ENCODE measurements at regions of chr5 and their contacts with region 1.

Region 1: GRCh38 chr5:136080483-136081216 is 51.9 kb downstream of the TGFBI start:
- DNase-seq: peak; percentile 80 to 86 (median 86)
- H3K4me3 ChIP-seq: peak overlapping the region; percentile 11 to 61 (median 43)
- H3K27ac ChIP-seq: no peak overlapping the region
- H3K4me1 ChIP-seq: peaks cover 0 to 16% (median 5%) of the 10 kb centered on the region in 4 experiments
- H3K27me3 ChIP-seq: peaks cover 10 to 61% (median 54%) of the 10 kb centered on the region in 5 experiments

Region 2: DNA sequence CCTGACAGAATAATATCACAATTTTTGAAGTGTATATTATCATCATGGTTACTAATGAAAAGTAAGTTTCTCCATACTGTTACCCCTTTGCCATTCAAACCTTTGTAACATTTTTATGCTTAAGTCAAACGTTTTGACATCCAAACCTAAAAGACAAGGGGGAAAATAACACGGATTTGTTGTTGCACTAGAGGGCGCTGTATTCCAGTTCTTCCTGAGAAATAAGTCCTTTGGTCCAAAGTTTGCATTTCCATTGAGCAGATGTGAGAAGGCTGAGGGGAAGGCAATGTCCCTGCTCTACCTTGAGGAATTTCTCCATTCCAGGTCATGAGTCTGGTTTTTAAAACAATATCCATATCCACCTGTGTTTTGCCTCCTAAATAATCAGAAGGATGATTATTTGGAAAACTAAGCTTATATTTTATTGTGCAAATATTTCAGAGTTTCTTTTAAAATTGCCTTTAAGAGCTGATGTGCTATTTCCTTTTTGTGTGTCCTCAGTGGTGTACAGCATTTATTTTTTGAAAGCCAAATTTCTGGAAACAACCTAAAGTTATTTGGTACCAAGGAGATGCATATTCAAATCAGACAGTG is 135.6 kb before region 1 on chr5:
- CTCF ChIA-PET with region 1: interaction called, 13 read pairs
- POLR2A ChIA-PET with region 1: no interaction called
- DNase-seq: peak; percentile 77 to 88 (median 84)
- H3K4me3 ChIP-seq: no peak overlapping the region
- H3K27ac ChIP-seq: no peak overlapping the region
- H3K4me1 ChIP-seq: no peaks in the 10 kb centered on the region
- H3K27me3 ChIP-seq: peaks cover 2 to 25% (median 11%) of the 10 kb centered on the region in 5 experiments

Region 3: GRCh38 chr5:135977375-135977928 is 103.2 kb before region 1 on chr5:
- CTCF ChIA-PET with region 1: interaction called, 10 read pairs
- POLR2A ChIA-PET with region 1: no interaction called
- DNase-seq: peak; percentile 55 to 73 (median 64)
- H3K4me3 ChIP-seq: no peak overlapping the region
- H3K27ac ChIP-seq: no peak overlapping the region
- H3K4me1 ChIP-seq: no peaks in the 10 kb centered on the region
- H3K27me3 ChIP-seq: peaks cover 2 to 33% (median 19%) of the 10 kb centered on the region in 5 experiments

Region 4: GRCh38 chr5:136062366-136063274 is 18.0 kb before region 1 on chr5:
- CTCF ChIA-PET with region 1: interaction called, 20 read pairs
- POLR2A ChIA-PET with region 1: no interaction called
- DNase-seq: peak; percentile 59 to 74 (median 74)
- H3K4me3 ChIP-seq: no peak overlapping the region
- H3K27ac ChIP-seq: no peak overlapping the region
- H3K4me1 ChIP-seq: no peaks in the 10 kb centered on the region
- H3K27me3 ChIP-seq: peaks cover 0 to 13% (median 0%) of the 10 kb centered on the region in 5 experiments

Region 5: DNA sequence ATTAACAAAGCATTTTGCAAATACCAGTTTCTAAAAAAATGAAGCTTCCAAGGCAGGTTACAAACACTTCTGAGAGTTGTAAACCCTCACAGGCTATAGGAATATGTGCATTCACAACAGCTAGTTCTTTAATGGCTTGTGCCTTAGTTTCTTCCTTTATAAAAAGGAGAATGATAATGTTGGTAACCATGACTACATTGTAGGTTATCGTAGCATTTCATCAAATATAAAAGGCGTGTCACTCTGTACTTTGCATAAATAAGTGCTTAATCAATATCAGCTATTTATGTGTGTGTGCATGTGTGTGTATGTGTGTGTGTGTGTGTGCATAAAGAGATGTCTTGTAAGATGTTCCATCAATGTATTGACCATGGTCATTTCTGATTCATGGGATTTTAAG is 43.7 kb after region 1 on chr5:
- CTCF ChIA-PET with region 1: interaction called, 13 read pairs
- POLR2A ChIA-PET with region 1: no interaction called
- DNase-seq: no peak
- H3K4me3 ChIP-seq: no peak overlapping the region
- H3K27ac ChIP-seq: no peak overlapping the region
- H3K4me1 ChIP-seq: no peaks in the 10 kb centered on the region
- H3K27me3 ChIP-seq: peaks cover 0 to 8% (median 0%) of the 10 kb centered on the region in 5 experiments

Region 6: GRCh38 chr5:136232316-136232715 is 151.7 kb after region 1 on chr5:
- CTCF ChIA-PET with region 1: no interaction called
- POLR2A ChIA-PET with region 1: no interaction called
- DNase-seq: no peak
- H3K4me3 ChIP-seq: no peak overlapping the region
- H3K27ac ChIP-seq: no peak overlapping the region
- H3K4me1 ChIP-seq: no peaks in the 10 kb centered on the region
- H3K27me3 ChIP-seq: peaks cover 0 to 20% (median 7%) of the 10 kb centered on the region in 5 experiments

Measured in common myeloid progenitor, CD34-positive (primary cell).